ENCODE measurements at regions of chr12 and their contacts with region 1.

Region 1: DNA sequence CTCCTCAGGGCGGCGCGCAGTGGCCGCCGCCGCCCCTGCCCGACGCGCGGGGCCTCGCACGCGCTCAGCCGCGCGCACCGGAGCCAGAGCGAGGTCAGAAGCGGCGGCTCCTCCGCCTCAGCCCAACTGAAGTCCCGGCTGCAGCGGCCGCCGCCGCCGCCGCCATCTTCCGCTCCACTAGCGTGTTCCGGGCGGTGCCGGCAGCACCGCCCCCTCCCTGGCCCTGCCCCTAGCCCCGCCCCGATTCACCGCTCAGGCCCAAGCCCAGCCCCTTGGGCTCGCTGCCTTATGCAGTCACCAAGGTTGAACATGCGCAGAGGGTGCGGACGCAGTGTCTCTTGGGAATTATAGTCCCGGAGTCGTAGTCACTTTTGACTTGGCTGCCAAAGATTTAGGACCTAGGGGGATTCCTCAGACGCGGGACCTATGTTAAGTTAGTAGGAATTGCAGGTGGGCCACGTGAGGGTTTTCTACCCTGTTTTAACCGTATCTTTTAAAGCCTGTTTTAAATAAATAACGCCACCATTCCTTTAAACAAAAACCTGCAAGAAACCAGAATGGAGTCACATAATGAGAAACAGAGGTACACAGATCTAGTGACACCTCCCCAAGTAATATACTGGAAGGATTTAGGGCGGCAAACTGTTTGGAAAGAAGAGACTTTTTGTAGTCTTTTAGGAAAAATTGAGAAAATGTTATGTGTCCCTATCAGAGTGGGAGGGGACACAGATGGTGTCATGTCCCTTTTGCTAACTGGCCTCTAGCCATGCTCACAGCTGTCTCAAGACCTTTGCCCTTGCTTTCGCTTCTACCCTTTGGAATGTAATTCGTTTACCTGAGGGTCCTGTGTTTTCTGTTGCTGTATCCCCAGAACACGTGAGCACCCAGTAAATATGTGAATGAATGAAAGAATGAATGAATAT is at the start of gene PPTC7:
- DNase-seq: peak; percentile 90 to 98
- ATAC-seq: peak; percentile 86 to 99 (median 94)
- H3K4me3 ChIP-seq: peak within 1 kb of the TSS; percentile 55
- H3K4me3 Mint-ChIP-seq: peak within 1 kb of the TSS; percentile 95
- H3K27ac ChIP-seq: peak within 1 kb of the TSS; percentile 74
- H3K27ac Mint-ChIP-seq: peak within 1 kb of the TSS; percentile 92 to 95
- H3K4me1 ChIP-seq: peaks cover 51% of the 10 kb centered on the region
- H3K4me1 Mint-ChIP-seq: peaks cover 47 to 52% of the 10 kb centered on the region in 2 donors
- H3K27me3 ChIP-seq: no peaks in the 10 kb centered on the region
- H3K27me3 Mint-ChIP-seq: no peaks in the 10 kb centered on the region
- CTCF ChIP-seq: no peak
- total RNA-seq, gene PPTC7: 44.0 to 52.7 (median 48.0) TPM

Region 2: GRCh38 chr12:110501752-110502738 is 81.4 kb before region 1 on chr12 and contains the starts of genes RAD9B and VPS29:
- intact Hi-C with region 1: loop called (anchors 2 kb)
- DNase-seq: peak; percentile 99 to 100
- ATAC-seq: peak; percentile 93 to 98 (median 94)
- H3K4me3 ChIP-seq: peak within 1 kb of the TSS; percentile 97
- H3K4me3 Mint-ChIP-seq: peak within 1 kb of the TSS; percentile 99
- H3K27ac ChIP-seq: peak within 1 kb of the TSS; percentile 91
- H3K27ac Mint-ChIP-seq: peak within 1 kb of the TSS; percentile 98 to 100
- H3K4me1 ChIP-seq: peaks cover 20% of the 10 kb centered on the region
- H3K4me1 Mint-ChIP-seq: peaks cover 29 to 33% of the 10 kb centered on the region in 2 donors
- H3K27me3 ChIP-seq: no peaks in the 10 kb centered on the region
- H3K27me3 Mint-ChIP-seq: no peaks in the 10 kb centered on the region
- CTCF ChIP-seq: no peak
- total RNA-seq, gene RAD9B: 0.18 to 1.8 (median 0.91) TPM
- total RNA-seq, gene VPS29: 94.3 to 115 (median 99.6) TPM

Region 3: GRCh38 chr12:110546339-110546738 is 37.1 kb before region 1 on chr12:
- intact Hi-C with region 1: loop called (anchors 5 kb)
- DNase-seq: no peak
- ATAC-seq: no peak
- H3K4me3 ChIP-seq: no peak overlapping the region
- H3K4me3 Mint-ChIP-seq: no peak overlapping the region
- H3K27ac ChIP-seq: no peak overlapping the region
- H3K27ac Mint-ChIP-seq: peak overlapping the region; percentile 19 to 25
- H3K4me1 ChIP-seq: no peaks in the 10 kb centered on the region
- H3K4me1 Mint-ChIP-seq: peaks cover 34 to 42% of the 10 kb centered on the region in 2 donors
- H3K27me3 ChIP-seq: no peaks in the 10 kb centered on the region
- H3K27me3 Mint-ChIP-seq: no peaks in the 10 kb centered on the region
- CTCF ChIP-seq: no peak

Region 4: GRCh38 chr12:110613771-110614684 is 30.6 kb after region 1 on chr12 and contains the start of gene TCTN1:
- intact Hi-C with region 1: loop called (anchors 1 kb)
- DNase-seq: peak; percentile 91 to 96
- ATAC-seq: peak; percentile 99 to 100 (median 99)
- H3K4me3 ChIP-seq: peak within 1 kb of the TSS; percentile 56
- H3K4me3 Mint-ChIP-seq: peak within 1 kb of the TSS; percentile 88
- H3K27ac ChIP-seq: peak within 1 kb of the TSS; percentile 62
- H3K27ac Mint-ChIP-seq: peak within 1 kb of the TSS; percentile 71 to 85
- H3K4me1 ChIP-seq: peaks cover 12% of the 10 kb centered on the region
- H3K4me1 Mint-ChIP-seq: peaks cover 6 to 8% of the 10 kb centered on the region in 2 donors
- H3K27me3 ChIP-seq: no peaks in the 10 kb centered on the region
- H3K27me3 Mint-ChIP-seq: no peaks in the 10 kb centered on the region
- CTCF ChIP-seq: no peak
- total RNA-seq, gene TCTN1: 4.3 to 6.6 (median 5.2) TPM

Region 5: DNA sequence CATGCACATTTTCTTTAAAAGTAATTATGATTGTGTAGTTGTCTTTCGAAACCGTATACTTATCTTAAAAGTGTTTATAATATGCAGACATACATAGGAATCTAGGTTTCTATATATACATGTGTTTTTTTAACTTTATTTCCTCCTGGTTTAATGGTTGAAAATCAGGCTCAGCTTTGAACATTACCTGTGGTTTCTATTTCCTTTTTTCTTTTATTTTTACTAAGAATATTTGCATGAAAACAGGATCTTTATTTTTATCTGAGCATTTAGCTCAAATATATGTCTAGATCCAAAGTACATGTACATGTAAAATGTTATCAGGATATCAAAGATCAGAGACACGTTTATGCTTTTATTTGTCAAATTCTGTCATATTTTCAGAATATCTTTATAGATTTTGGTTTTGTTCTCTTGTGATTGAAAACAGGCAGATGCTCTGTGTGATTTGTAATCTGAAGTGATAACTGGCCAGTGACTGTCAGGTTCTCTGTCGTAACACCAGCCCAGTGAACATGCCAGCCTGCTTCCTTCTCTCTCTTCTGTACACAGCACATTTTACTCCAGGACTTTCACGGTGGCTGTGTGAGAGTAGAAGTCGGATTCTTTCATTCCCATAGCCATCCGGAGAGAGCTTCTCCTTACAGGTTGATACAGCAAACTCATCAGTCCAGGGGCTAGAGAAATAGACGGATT is 44.2 kb after region 1 on chr12:
- intact Hi-C with region 1: no loop called
- DNase-seq: no peak
- ATAC-seq: no peak
- H3K4me3 ChIP-seq: no peak overlapping the region
- H3K4me3 Mint-ChIP-seq: no peak overlapping the region
- H3K27ac ChIP-seq: peak overlapping the region; percentile 40
- H3K27ac Mint-ChIP-seq: no peak overlapping the region
- H3K4me1 ChIP-seq: peaks cover 4% of the 10 kb centered on the region
- H3K4me1 Mint-ChIP-seq: no peaks in the 10 kb centered on the region
- H3K27me3 ChIP-seq: no peaks in the 10 kb centered on the region
- H3K27me3 Mint-ChIP-seq: no peaks in the 10 kb centered on the region
- CTCF ChIP-seq: no peak

Measured in natural killer cell (primary cell).